CD14-positive monocyte (primary cell): ENCODE measurements at regions of chr1 and their contacts with region 1.

Region 1: DNA sequence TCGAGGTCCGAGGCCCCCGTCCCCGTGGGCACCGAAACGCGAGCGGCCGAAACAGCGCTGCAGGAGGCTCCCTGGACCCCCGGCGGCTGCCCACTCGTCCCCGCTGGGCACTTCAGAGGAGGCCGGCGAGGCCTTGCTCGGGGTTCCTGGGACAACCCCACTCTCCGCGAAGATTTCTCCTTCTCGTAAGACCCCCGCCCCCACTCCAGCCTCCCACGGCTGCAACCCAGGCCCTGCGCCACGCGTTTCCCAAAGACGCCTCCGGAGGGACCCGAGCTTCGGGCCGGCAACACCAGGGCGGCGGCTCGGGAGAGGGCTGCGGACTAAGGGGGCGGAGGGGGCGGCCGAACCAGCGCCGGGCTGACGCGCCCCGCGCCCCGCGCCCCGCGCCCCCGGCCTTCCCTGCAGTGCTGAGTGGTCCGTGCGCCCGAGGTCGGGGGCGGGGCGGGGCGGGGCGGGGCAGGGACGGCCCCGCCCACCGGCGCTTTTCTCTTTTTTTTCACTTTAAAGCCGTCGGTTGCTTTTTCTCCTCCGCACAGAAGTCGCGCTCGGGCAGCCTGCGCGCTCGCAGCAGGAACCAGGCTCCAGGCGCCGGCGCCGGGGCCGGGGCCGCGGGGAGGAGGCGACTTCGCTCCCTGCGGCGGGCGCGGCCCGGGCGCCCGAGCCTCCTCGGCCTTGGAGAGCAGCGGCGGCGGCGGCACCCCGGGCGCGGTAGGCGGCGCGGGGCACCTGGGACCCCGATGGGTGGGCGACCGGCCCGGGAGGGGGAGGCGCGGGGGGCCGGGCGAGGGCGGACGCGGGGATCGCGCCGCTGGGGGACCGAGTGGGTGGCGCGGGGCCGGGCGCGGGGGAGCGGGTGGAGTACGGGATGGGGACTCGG is at the start of gene SPSB1:
- DNase-seq: peak; percentile 52 to 62 (median 62)
- H3K4me3 ChIP-seq: peak within 1 kb of the TSS; percentile 45 to 75 (median 46)
- H3K4me3 Mint-ChIP-seq: peak within 1 kb of the TSS; percentile 64 to 73
- H3K27ac ChIP-seq: no peak within 1 kb of the TSS
- H3K27ac Mint-ChIP-seq: peak within 1 kb of the TSS in 2 of 7 donors; percentile 36 to 38
- H3K4me1 ChIP-seq: peaks cover 22 to 32% of the 10 kb centered on the region in 2 donors
- H3K4me1 Mint-ChIP-seq: peaks cover 20% of the 10 kb centered on the region
- H3K27me3 ChIP-seq: peaks cover 16 to 47% of the 10 kb centered on the region in 2 donors
- H3K27me3 Mint-ChIP-seq: peaks cover 19 to 32% (median 27%) of the 10 kb centered on the region in 3 donors
- CTCF ChIP-seq: no peak
- polyA plus RNA-seq, gene SPSB1: 0.15 to 1.2 (median 0.29) TPM

Region 2: DNA sequence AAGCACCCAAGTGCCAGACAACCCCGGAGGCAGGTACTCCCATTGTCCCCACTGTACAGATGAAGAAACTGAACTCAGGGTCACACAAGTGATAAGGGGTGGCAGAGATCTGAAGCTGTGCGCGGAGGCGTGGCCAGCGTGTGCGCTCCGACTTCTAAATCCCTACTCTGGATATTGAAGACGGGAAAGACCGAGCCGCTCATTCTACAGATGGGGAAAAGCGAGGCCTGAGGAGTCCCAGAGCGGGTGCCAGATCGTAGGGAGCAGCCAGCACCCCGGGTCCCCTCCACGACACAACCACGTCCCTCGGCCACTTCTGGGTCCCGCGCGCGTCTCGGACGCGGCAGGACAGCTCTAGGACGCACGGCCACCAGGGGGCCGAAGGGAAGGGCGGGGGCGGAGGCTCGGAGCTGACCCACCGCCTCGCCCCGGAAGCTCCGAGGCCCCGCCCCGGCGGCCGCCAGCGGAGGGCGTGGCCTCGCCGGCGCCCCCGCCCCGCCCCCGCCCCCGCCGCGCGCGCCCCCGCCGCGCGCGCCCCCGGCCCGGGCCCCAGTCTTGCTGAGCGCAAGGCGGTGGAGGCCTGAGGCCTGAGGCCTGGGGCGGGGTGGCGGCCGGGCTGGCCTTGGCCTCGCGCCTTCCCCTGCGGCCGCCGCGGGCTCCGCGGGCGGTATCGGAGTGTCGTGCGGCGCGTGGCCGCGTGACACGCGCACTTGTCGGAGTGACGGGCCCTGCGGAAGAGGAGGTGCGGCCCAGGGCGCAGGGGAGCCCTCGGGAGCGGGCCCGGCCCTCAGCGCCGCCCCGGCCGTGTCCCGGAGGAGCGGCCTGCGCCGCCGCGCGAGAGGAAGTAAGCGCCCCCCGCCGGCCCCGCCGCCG is 58.1 kb before region 1 on chr1 and contains the start of gene H6PD:
- intact Hi-C with region 1: loop called in 1 of 2 experiments (anchors 5 kb)
- DNase-seq: peak; percentile 86 to 92 (median 90)
- H3K4me3 ChIP-seq: peak within 1 kb of the TSS; percentile 54 to 85 (median 83)
- H3K4me3 Mint-ChIP-seq: peak within 1 kb of the TSS; percentile 89 to 97
- H3K27ac ChIP-seq: peak within 1 kb of the TSS; percentile 84 to 97
- H3K27ac Mint-ChIP-seq: peak within 1 kb of the TSS; percentile 96 to 98 (median 98)
- H3K4me1 ChIP-seq: peaks cover 58 to 84% of the 10 kb centered on the region in 2 donors
- H3K4me1 Mint-ChIP-seq: peaks cover 75% of the 10 kb centered on the region
- H3K27me3 ChIP-seq: peaks cover 0 to 3% of the 10 kb centered on the region in 2 donors
- H3K27me3 Mint-ChIP-seq: peaks cover 5 to 13% (median 5%) of the 10 kb centered on the region in 3 donors
- CTCF ChIP-seq: peak; percentile 68
- polyA plus RNA-seq, gene H6PD: 8.6 to 15.9 (median 11.4) TPM

Region 3: DNA sequence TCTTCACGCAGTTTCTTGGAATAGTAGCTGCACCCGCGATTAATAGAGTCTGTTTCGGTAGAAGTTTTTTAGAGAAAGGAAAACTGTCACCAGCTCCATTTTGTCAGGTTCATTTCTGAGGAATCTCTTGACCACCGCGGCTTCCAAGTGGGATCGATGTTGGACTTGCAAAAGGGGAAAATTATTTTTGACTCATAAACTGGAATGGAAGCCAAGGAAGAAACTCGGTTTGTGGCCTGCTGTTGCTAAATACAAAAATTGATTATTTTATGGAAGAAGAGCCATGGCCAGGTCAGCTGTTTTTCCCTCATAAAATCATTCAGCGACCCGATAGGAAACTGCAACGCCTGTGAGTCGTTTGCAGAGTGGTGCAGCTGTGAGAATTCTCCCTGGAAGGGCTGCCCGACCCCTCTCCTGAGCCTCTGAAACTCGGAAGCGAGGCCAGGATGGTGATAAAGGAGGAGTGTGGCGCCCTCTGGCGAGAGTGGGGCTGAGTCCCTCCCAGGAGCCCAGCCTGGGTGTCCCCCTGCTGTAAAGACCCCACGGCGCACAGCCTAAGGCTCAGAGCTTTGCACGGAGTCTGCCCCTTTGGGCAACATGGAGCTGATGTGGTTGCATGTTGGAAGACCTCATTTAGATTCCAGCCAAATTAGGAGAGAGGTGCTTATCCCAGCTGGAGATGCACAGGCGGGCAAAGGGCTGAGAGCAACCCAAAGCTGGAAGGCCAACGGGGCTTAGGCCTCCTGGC is 163.1 kb after region 1 on chr1:
- intact Hi-C with region 1: loop called in 1 of 2 experiments (anchors 10 kb)
- DNase-seq: peak in 2 of 3 donors; percentile 23 to 34
- H3K4me3 ChIP-seq: no peak overlapping the region
- H3K4me3 Mint-ChIP-seq: no peak overlapping the region
- H3K27ac ChIP-seq: no peak overlapping the region
- H3K27ac Mint-ChIP-seq: no peak overlapping the region
- H3K4me1 ChIP-seq: no peaks in the 10 kb centered on the region
- H3K4me1 Mint-ChIP-seq: no peaks in the 10 kb centered on the region
- H3K27me3 ChIP-seq: no peaks in the 10 kb centered on the region
- H3K27me3 Mint-ChIP-seq: peaks cover 7 to 8% (median 7%) of the 10 kb centered on the region in 3 donors
- CTCF ChIP-seq: peak; percentile 78